Natural killer cell (primary cell): ENCODE measurements at regions of chr1 and their contacts with region 1.

Region 1: GRCh38 chr1:17335821-17336710 is 28.1 kb downstream of the PADI4 start:
- DNase-seq: peak; percentile 32 to 64
- ATAC-seq: peak in 2 of 3 donors; percentile 59 to 63
- H3K4me3 ChIP-seq: no peak overlapping the region
- H3K4me3 Mint-ChIP-seq: no peak overlapping the region
- H3K27ac ChIP-seq: no peak overlapping the region
- H3K27ac Mint-ChIP-seq: no peak overlapping the region
- H3K4me1 ChIP-seq: no peaks in the 10 kb centered on the region
- H3K4me1 Mint-ChIP-seq: peaks cover 0 to 5% of the 10 kb centered on the region in 2 donors
- H3K27me3 ChIP-seq: no peaks in the 10 kb centered on the region
- H3K27me3 Mint-ChIP-seq: peaks cover 0 to 7% of the 10 kb centered on the region in 2 donors
- CTCF ChIP-seq: peak; percentile 68

Region 2: DNA sequence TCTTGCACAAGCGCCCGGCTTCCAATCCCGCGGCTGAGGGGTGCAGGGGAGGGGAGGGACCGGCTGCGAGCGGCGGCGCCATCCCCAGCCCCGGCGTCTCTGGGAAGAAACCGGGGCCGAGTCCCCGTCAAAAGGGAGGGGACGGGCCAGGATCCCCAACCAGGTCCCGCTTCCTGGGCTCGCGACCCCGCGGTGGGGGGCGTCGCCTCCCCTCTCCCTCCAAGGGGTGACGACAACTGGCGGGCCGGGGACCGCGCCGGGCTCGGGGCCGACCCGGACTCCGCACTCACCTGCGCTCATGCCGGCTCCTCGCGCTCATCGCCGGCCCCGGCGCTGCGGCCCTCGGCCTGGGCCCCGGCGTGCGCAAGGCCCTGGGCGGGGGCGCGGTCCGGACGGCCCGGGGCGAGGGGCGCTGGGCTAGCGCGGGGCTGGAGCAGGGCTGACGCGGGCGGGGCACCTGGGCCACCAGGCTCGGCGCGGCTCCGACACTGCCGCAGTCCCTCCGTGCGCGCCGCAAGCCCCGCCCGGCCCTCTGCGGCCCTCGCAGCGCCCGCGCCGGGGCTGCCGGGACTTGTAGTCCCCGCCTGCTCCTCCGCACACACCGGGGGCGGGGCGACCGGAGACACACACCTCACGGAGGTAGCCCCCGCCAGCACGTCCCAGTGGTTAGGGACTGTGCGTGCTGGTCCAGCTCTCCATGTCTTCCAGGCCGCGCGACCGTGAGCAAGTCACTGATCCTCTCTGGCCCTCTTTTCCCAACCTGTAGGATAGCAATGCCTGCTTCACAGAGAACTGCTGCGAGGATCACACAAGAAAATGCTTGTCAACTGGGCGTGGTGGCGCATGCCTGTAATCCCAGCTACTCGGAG is 324.4 kb before region 1 on chr1 and contains the start of gene ATP13A2:
- intact Hi-C with region 1: no loop called
- DNase-seq: peak; percentile 77 to 91
- ATAC-seq: peak; percentile 98 to 99 (median 98)
- H3K4me3 ChIP-seq: peak within 1 kb of the TSS; percentile 68
- H3K4me3 Mint-ChIP-seq: peak within 1 kb of the TSS; percentile 85
- H3K27ac ChIP-seq: no peak within 1 kb of the TSS
- H3K27ac Mint-ChIP-seq: peak within 1 kb of the TSS in 1 of 2 donors; percentile 49
- H3K4me1 ChIP-seq: peaks cover 34% of the 10 kb centered on the region
- H3K4me1 Mint-ChIP-seq: peaks cover 5 to 23% of the 10 kb centered on the region in 2 donors
- H3K27me3 ChIP-seq: no peaks in the 10 kb centered on the region
- H3K27me3 Mint-ChIP-seq: no peaks in the 10 kb centered on the region
- CTCF ChIP-seq: no peak
- total RNA-seq, gene ATP13A2: 38.7 to 53.6 (median 42.8) TPM

Region 3: GRCh38 chr1:17125756-17126237 is 210.3 kb before region 1 on chr1:
- intact Hi-C with region 1: loop called (anchors 1 kb)
- DNase-seq: peak; percentile 80 to 88
- ATAC-seq: peak; percentile 77 to 92 (median 85)
- H3K4me3 ChIP-seq: no peak overlapping the region
- H3K4me3 Mint-ChIP-seq: no peak overlapping the region
- H3K27ac ChIP-seq: no peak overlapping the region
- H3K27ac Mint-ChIP-seq: no peak overlapping the region
- H3K4me1 ChIP-seq: peaks cover 5% of the 10 kb centered on the region
- H3K4me1 Mint-ChIP-seq: peaks cover 0 to 6% of the 10 kb centered on the region in 2 donors
- H3K27me3 ChIP-seq: no peaks in the 10 kb centered on the region
- H3K27me3 Mint-ChIP-seq: peaks cover 5 to 6% of the 10 kb centered on the region in 2 donors
- CTCF ChIP-seq: peak; percentile 89